ENCODE measurements at regions of chr3 and their contacts with region 1.

Region 1: GRCh38 chr3:158727206-158728060 is 4.8 kb downstream of the RARRES1 start:
- DNase-seq: peak; percentile 37 to 48
- H3K4me3 ChIP-seq: no peak overlapping the region
- H3K27ac ChIP-seq: no peak overlapping the region
- H3K4me1 ChIP-seq: peaks cover 9 to 40% of the 10 kb centered on the region in 2 donors
- H3K27me3 ChIP-seq: no peaks in the 10 kb centered on the region
- CTCF ChIP-seq: peak; percentile 44 to 92 (median 82)
- POLR2A ChIP-seq: no peak

Region 2: DNA sequence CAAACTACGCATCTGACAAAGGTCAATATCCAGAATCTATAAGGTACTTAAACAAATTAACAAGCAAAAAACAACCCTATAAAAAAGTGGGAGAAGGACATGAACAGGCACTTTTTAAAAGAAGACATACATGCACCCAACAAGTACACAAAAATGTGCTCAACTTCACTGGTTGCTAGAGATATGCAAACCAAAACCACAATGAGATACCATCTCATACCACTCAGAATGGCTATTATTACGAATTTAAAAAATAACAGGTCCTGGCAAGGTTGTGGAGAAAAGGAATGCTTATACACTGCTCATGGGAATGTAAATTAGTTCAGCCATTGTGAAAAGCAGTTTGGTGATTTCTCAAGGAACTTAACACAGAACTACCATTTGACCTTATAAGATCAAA is 332.0 kb before region 1 on chr3:
- intact Hi-C with region 1: no loop called
- DNase-seq: no peak
- H3K4me3 ChIP-seq: no peak overlapping the region
- H3K27ac ChIP-seq: no peak overlapping the region
- H3K4me1 ChIP-seq: no peaks in the 10 kb centered on the region
- H3K27me3 ChIP-seq: no peaks in the 10 kb centered on the region
- CTCF ChIP-seq: no peak
- POLR2A ChIP-seq: no peak

Region 3: DNA sequence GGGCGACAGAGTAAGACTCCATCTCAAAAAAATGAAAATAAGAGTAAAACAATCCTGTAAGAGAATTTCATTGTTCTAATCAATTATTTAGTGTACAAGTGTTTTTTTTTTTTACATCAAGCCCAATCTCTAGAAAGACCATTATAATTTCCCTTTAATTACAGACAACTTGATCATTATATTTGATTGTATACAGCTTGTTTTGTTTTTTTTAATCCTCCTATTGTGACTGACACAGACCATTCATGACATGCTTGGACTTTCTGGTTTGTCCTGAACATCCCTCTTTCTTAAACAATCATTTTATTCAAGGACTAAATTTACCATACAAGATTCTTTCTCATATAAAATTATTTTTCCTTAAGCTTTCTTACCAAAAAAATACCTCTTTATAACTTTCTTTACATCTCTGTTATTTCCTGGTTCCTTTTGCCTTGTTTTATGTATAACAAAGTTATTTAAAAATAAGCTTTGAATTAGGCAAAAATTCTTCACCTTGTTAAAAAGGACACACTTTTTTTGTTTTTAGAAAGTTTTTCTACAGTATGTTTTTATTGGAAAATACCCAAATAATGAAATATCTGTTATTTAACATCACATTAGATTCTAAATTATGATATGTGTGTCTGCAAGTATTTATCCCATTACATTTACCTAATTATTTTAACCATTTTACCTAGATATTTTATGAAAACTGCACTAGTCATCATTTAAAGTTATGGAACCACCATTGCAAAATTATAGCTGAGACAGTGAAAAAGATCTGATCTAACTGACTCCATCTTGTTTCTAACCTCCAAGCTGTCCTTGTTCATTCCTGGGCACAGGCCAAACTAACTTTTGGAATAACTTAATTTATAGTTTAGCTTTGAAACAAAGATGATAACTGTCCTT is 109.2 kb before region 1 on chr3:
- intact Hi-C with region 1: no loop called
- DNase-seq: no peak
- H3K4me3 ChIP-seq: no peak overlapping the region
- H3K27ac ChIP-seq: no peak overlapping the region
- H3K4me1 ChIP-seq: no peaks in the 10 kb centered on the region
- H3K27me3 ChIP-seq: no peaks in the 10 kb centered on the region
- CTCF ChIP-seq: no peak
- POLR2A ChIP-seq: no peak

Region 4: DNA sequence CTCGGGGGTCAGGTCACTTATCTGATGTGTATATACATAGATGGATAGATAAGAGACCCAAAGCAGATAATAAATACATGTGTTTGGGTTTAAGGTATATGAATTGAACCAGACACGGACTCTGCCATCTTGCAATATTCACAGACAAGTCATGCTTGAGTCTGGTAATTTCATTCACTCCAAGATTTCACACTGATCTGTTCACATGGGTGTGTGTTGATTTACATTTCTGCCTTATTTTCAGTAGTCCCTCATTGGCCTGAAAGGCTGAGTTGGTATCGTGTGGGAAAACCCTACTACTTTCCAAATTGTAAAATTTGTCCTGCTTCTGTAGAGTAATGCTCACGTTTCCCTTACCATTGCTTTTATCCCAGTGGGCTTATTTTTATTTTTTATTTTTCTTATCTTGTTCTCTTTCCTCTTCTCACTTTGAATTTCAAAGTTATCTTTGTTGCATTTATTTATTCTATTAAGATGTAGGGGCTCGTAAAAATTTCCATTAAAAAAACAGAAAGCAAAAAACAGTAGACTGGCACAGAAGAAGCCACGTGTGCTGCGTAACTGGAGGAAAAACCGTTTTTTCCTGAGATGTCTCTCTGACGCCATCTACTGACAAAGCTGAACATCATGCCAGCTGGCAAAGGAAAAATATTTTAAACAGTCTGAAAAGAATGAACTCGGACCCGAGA is 63.6 kb after region 1 on chr3:
- intact Hi-C with region 1: loop called (anchors 2 kb)
- DNase-seq: peak; percentile 10 to 20
- H3K4me3 ChIP-seq: no peak overlapping the region
- H3K27ac ChIP-seq: no peak overlapping the region
- H3K4me1 ChIP-seq: peaks cover 0 to 6% of the 10 kb centered on the region in 2 donors
- H3K27me3 ChIP-seq: no peaks in the 10 kb centered on the region
- CTCF ChIP-seq: peak; percentile 57 to 90 (median 80)
- POLR2A ChIP-seq: no peak

Measured in thyroid gland (tissue), 4 donors.